Endothelial cell of umbilical vein (primary cell): ENCODE measurements at regions of chr9 and their contacts with region 1.

Region 1: DNA sequence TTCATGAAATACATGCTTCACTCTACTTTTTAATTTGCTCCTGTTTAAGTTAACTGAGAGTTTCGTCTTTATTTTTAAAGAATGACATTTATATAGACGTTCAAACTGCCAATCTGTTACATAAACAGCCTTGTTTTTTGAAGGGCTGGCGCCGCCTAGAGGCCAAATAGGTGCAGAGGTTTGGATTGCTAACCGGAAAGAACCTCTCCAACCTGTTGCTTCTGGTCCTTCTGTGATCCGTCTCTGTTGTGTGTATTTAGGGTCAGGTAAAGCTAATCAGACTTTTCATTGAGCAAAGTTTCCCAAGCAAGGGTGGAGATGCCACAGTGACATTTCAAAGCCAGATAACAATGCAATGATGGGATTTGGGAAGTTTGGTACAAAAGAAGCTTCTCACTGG is 39.5 kb upstream of the GLIS3 start:
- DNase-seq: peak; percentile 86
- H3K4me3 ChIP-seq: no peak overlapping the region
- H3K27ac ChIP-seq: no peak overlapping the region
- H3K4me1 ChIP-seq: peaks cover 6% of the 10 kb centered on the region
- H3K27me3 ChIP-seq: no peaks in the 10 kb centered on the region
- CTCF ChIP-seq: peak; percentile 85 to 97
- POLR2A ChIP-seq: no peak

Region 2: GRCh38 chr9:3478549-3478953 is 860.8 kb before region 1 on chr9:
- CTCF ChIA-PET with region 1: interaction called, 5 read pairs
- POLR2A ChIA-PET with region 1: no interaction called
- dilution Hi-C with region 1: no loop called
- intact Hi-C with region 1: loop called (anchors 10 kb)
- DNase-seq: peak; percentile 76
- H3K4me3 ChIP-seq: no peak overlapping the region
- H3K27ac ChIP-seq: peak overlapping the region; percentile 83
- H3K4me1 ChIP-seq: peaks cover 58% of the 10 kb centered on the region
- H3K27me3 ChIP-seq: no peaks in the 10 kb centered on the region
- CTCF ChIP-seq: no peak
- POLR2A ChIP-seq: no peak

Region 3: GRCh38 chr9:4137234-4137633 is 202.1 kb before region 1 on chr9:
- CTCF ChIA-PET with region 1: interaction called, 3 read pairs
- POLR2A ChIA-PET with region 1: no interaction called
- dilution Hi-C with region 1: no loop called
- intact Hi-C with region 1: loop called (anchors 10 kb)
- DNase-seq: peak; percentile 88
- H3K4me3 ChIP-seq: no peak overlapping the region
- H3K27ac ChIP-seq: peak overlapping the region; percentile 55
- H3K4me1 ChIP-seq: peaks cover 22% of the 10 kb centered on the region
- H3K27me3 ChIP-seq: no peaks in the 10 kb centered on the region
- CTCF ChIP-seq: no peak
- POLR2A ChIP-seq: no peak

Region 4: GRCh38 chr9:4315582-4316215 is 23.7 kb before region 1 on chr9:
- CTCF ChIA-PET with region 1: interaction called, 227 read pairs
- POLR2A ChIA-PET with region 1: no interaction called
- dilution Hi-C with region 1: no loop called
- intact Hi-C with region 1: loop called (anchors 1 kb)
- DNase-seq: peak; percentile 85
- H3K4me3 ChIP-seq: no peak overlapping the region
- H3K27ac ChIP-seq: no peak overlapping the region
- H3K4me1 ChIP-seq: peaks cover 4% of the 10 kb centered on the region
- H3K27me3 ChIP-seq: no peaks in the 10 kb centered on the region
- CTCF ChIP-seq: peak; percentile 89 to 93
- POLR2A ChIP-seq: no peak

Region 5: GRCh38 chr9:4356306-4356705 is 16.9 kb after region 1 on chr9:
- CTCF ChIA-PET with region 1: interaction called, 17 read pairs
- POLR2A ChIA-PET with region 1: no interaction called
- dilution Hi-C with region 1: no loop called
- intact Hi-C with region 1: no loop called
- DNase-seq: peak; percentile 88
- H3K4me3 ChIP-seq: no peak overlapping the region
- H3K27ac ChIP-seq: no peak overlapping the region
- H3K4me1 ChIP-seq: no peaks in the 10 kb centered on the region
- H3K27me3 ChIP-seq: peaks cover 0 to 13% of the 10 kb centered on the region in 2 experiments
- CTCF ChIP-seq: no peak
- POLR2A ChIP-seq: no peak

Region 6: GRCh38 chr9:4375424-4376200 is 36.3 kb after region 1 on chr9:
- CTCF ChIA-PET with region 1: interaction called, 19 read pairs
- POLR2A ChIA-PET with region 1: no interaction called
- dilution Hi-C with region 1: no loop called
- intact Hi-C with region 1: no loop called
- DNase-seq: peak; percentile 47
- H3K4me3 ChIP-seq: no peak overlapping the region
- H3K27ac ChIP-seq: no peak overlapping the region
- H3K4me1 ChIP-seq: no peaks in the 10 kb centered on the region
- H3K27me3 ChIP-seq: peaks cover 4 to 10% of the 10 kb centered on the region in 2 experiments
- CTCF ChIP-seq: peak; percentile 18 to 23
- POLR2A ChIP-seq: no peak